Heart left ventricle (tissue), 16 donors: ENCODE measurements at regions of chr20 and their contacts with region 1.

Region 1: GRCh38 chr20:10636326-10636818 is 37.4 kb downstream of the JAG1 start:
- DNase-seq: peak in 1 of 5 donors; percentile 50
- ATAC-seq: peak; percentile 31 to 56 (median 40)
- H3K4me3 ChIP-seq: no peak overlapping the region
- H3K27ac ChIP-seq: peak overlapping the region; percentile 22 to 81 (median 62)
- H3K4me1 ChIP-seq: peaks cover 7 to 87% (median 56%) of the 10 kb centered on the region in 12 donors
- H3K27me3 ChIP-seq: no peaks in the 10 kb centered on the region
- CTCF ChIP-seq: no peak
- POLR2A ChIP-seq: no peak

Region 2: GRCh38 chr20:10581823-10582222 is 54.5 kb before region 1 on chr20:
- intact Hi-C with region 1: loop called in 1 of 10 experiments (anchors 5 kb)
- DNase-seq: no peak
- ATAC-seq: no peak
- H3K4me3 ChIP-seq: no peak overlapping the region
- H3K27ac ChIP-seq: no peak overlapping the region
- H3K4me1 ChIP-seq: peaks cover 0 to 12% (median 1%) of the 10 kb centered on the region in 12 donors
- H3K27me3 ChIP-seq: no peaks in the 10 kb centered on the region
- CTCF ChIP-seq: no peak
- POLR2A ChIP-seq: no peak